Aorta (tissue), 5 donors: ENCODE measurements at regions of chr1 and their contacts with region 1.

Region 1: DNA sequence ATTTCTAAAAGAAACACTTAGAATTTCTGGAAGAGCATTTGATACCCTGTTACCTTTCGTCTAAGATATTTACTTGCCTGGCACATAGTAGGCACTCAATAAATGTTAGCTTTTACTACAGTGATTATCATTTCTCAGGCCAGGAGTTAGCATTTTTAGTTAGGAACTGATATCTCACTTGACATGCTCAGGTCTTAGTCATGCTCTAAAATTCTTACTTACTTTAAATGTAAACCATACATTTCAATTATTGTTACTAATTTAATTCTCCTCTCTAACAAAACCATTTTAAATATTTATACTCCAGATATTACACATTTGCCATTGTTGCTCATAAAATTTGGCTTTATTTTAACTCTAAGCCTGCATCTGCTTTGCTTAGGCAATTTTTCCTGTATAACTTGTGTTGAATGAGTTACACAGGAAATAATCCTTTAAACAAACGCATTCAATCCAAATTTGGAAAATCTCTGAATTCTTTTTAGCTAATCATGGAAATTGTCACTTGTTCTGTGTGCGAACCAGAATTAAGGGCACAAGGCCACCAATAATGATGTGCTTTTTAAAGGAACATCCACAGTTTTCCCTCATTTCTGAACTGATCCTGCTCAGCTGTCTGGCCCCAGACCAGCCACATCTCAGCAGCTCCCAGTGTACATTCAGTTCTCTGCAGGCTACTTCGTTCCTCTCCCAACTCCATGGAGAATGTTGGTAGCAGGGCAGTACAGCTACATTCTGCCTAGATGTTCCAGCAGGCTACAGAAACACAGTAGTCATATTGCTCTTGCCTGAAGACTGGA is 15.6 kb downstream of the NIBAN1 start:
- DNase-seq: no peak
- ATAC-seq: peak; percentile 62
- H3K4me3 ChIP-seq: peak overlapping the region in 1 of 2 donors; percentile 10
- H3K27ac ChIP-seq: peak overlapping the region; percentile 43 to 48
- H3K4me1 ChIP-seq: peaks cover 6 to 11% of the 10 kb centered on the region in 2 donors
- H3K27me3 ChIP-seq: no peaks in the 10 kb centered on the region

Region 2: GRCh38 chr1:184903111-184903692 is 55.6 kb before region 1 on chr1:
- intact Hi-C with region 1: loop called (anchors 5 kb)
- DNase-seq: no peak
- ATAC-seq: no peak
- H3K4me3 ChIP-seq: no peak overlapping the region
- H3K27ac ChIP-seq: peak overlapping the region in 1 of 2 donors; percentile 81
- H3K4me1 ChIP-seq: peaks cover 10 to 25% of the 10 kb centered on the region in 2 donors
- H3K27me3 ChIP-seq: no peaks in the 10 kb centered on the region